GM13977 (cell line): ENCODE measurements at regions of chr12 and their contacts with region 1.

Region 1: DNA sequence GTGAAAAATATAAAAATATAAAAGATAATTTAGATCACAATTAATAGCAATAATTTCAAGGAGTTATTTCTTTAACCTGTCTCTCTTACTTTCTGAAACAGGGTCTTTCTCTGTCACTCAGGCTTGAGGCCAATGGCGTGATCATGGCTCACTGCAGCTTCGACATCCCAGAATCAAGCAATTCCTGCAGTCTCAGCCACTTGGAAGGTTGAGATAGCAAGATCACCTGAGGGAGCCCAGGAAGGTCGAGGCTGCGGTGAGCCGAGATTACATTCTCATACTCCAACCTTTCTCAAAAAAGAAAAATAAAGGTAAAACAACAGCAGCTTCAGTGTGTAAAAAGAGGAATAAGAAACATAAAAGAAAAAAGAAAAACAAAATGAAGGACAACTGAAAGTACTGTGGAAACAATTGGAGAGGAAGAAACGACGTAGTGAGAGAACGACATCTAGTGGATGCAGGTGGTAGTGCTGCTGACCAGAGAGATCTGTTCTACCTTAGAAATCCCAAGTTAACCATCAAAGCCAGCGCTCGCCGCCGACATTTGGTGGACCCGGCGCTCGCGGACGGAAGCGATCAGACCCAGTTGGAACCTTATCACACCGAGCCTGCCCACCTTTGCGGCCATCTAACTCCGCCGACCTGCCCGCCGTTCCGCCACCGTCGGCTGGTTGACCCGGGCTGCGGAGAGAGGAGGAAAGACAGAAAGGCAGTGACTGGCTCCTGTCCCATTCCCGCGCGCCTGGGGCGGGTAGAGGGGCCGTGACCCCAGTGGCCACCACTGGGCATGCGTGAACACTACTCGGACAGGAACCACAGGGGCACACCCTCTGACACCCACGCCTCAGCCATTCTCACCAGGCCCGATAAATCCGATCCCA is 196.1 kb downstream of the ALG10 start:
- DNase-seq: peak; percentile 66
- CTCF ChIP-seq: peak; percentile 82

Region 2: GRCh38 chr12:34048714-34049113 is 169.7 kb before region 1 on chr12:
- in situ Hi-C with region 1: loop called (anchors 10 kb)
- DNase-seq: no peak
- CTCF ChIP-seq: no peak

Region 3: DNA sequence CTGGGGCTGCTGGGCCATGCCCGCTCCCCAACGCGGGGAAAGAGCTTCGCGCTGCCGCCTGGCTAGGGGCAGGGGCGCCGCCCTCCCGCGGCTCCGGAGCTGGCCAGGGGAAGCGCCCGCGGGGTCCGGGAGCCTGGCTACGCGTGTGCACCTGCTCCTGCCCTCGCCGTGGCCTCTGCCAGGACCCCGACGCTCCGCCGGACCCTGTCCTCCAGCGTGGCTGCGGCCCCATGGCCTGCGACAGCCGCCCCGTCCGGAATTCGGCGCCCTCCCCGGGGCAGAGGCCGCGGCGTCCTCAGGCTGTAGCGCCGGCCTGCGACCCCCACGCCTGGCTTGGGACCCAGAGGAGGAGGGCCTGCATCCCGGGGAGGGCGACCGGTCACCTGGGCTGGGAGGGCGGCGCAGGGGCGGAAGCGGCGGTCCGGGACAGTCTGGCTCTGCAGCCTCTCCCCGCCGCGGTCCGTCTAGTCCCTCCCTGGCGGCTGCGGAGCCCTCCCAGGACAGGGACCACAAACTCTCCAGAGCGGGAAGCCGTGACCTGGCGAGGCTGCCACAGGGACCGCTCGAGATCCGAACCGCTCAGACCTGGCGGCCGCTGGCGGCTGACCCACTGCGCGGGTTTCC is 110.5 kb before region 1 on chr12:
- in situ Hi-C with region 1: loop called (anchors 25 kb)
- DNase-seq: no peak
- CTCF ChIP-seq: no peak

Region 4: GRCh38 chr12:34394211-34395055 is 176.0 kb after region 1 on chr12:
- in situ Hi-C with region 1: no loop called
- DNase-seq: peak; percentile 3
- CTCF ChIP-seq: no peak

Region 5: DNA sequence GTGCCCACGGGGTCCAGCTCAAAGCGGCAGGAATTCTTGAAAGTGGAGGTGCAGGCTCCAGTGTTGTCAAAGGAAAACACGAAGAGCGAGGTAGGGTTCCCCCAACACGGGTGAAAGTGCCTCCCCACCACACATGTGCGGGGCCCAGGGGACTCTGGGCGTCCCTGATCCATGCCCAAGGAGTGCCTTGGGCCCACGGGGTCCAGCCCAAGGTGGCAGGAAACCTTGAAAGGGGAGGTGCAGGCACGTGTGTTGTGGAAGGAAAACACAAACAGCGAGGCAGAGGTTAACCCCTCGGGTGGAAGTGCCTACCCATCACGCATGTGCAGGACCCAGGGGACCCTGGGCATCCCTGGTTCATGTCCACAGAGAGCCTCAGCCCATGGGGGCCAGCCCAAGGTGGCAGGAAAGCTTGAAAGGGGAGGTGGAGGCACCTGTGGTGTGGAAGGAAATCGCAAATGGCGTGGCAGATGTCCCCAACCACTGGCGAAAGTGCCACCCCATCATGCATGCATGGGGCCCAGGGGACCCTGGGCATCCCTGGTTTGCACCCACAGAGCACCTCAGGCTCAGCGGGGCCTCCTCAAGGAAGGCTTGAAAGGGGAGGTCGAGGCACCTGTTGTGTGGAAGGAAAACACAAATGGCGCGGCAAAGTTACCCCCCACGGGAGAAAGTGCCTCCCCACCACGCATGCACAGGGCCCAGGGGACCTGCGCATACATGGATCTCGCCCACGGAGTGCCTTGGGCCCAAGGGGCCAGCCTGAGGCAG is 388.5 kb after region 1 on chr12:
- in situ Hi-C with region 1: no loop called
- DNase-seq: peak; percentile 1
- CTCF ChIP-seq: no peak